Posterior cingulate gyrus (tissue), 11 donors: ENCODE measurements at regions of chr6 and their contacts with region 1.

Region 1: GRCh38 chr6:152267967-152268845 is 369.0 kb downstream of the SYNE1 start:
- DNase-seq: no peak

Region 2: GRCh38 chr6:151765444-151765886 is 502.7 kb before region 1 on chr6:
- intact Hi-C with region 1: loop called (anchors 1 kb)
- DNase-seq: peak in 1 of 10 donors; percentile 27

Region 3: DNA sequence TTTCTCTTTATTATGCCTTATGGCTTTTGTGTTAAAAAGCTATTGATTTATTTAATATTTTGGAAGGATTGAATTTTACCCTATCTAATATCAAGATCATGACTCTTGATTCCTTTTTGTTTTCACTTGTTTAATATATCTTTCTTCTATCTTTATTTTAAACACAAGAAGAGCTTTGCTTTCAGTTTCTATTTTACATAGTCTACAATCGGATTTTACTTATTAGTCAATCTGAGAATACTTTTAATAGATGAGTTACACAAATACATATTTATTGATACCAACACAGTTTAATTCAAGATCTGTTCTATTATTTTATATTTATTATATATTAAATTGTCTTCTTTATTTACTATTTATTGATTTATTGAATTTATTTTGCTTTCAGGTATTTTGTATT is 241.9 kb before region 1 on chr6:
- intact Hi-C with region 1: no loop called
- DNase-seq: no peak

Region 4: DNA sequence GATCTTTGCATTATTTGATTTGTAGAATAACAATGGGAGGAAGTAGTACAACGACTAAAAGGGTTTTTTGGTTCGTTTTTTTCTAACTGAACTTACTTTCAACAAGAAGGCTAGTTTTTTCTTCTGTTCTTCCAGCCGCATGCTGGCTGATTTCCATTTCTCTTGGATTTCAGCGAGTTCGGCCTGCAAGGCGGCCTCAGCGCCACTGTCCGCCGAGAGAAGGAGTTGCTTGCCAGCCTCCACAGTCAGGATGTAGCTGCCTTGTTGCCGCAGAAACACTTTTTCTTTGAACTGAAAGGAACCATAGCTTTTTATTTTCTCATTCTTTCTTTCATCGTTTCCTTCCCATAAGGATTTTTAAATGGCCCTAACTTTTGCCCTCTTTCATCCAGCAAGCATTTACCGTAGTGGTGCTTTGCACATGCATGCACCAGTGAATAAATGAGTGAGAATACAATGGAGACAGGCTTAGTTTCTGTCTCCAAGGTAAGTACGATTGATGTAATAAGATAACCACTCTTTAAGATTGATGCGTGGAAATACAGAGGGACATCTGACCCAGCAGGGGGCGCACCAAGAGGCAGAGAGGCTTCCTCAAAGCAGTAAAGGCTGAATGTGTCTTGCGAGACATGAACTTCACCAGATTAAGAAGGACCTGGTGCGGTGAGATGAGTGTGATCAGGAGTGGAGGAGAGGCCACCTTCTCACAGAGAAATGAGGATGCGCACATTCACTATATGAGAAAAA is 62.0 kb before region 1 on chr6:
- intact Hi-C with region 1: loop called (anchors 1 kb)
- DNase-seq: peak in 5 of 10 donors; percentile 28 to 83 (median 42)

Region 5: DNA sequence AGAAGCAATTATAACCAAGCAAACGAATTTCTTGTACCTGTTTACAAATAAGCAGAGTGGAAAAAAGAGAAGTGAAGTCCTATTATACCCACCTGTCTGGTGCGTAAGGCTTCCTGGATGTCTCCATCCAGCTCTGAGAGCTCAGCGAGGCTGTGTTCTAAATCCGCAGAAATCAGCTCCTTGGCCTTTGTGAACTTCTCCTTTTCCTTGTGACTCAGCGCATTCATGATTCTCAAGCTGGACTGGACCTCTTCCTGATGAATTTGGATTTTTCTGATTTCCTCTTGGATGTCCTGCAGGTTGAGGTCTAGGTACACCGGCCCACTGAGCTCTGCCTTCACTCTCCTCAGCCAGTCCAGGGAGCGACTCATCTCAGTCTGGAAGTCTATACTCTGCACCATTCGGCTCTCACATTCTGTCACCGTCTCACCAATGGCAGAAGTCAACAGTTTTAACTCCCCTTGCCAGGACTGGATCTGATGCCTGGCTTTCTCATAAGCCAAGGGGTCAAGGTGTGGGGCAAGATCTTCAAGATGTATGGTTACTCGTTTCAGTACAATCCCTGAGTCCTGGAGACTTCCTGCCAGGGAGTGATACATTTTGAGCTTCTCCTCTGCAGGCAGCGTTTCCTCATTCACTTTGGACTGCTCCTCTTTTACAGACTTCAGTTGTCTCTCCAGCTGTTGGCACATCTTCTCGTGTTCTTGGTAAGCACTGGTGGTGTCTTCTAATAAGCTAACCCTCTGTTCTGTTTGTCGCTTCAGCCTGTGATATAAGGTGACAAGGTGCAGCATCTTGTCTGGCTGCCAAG is 61.6 kb after region 1 on chr6:
- intact Hi-C with region 1: no loop called
- DNase-seq: no peak